Panc1 (cell line): ENCODE measurements at regions of chr6 and their contacts with region 1.

Region 1: GRCh38 chr6:157981395-157982296 is at the start of gene SYNJ2:
- DNase-seq: no peak
- ATAC-seq: peak; percentile 85
- H3K4me3 ChIP-seq: peak within 1 kb of the TSS; percentile 62 to 81
- H3K27ac ChIP-seq: peak within 1 kb of the TSS; percentile 97
- H3K4me1 ChIP-seq: peaks cover 34% of the 10 kb centered on the region
- H3K27me3 ChIP-seq: no peaks in the 10 kb centered on the region
- CTCF ChIP-seq: peak; percentile 90
- total RNA-seq, gene SYNJ2: 70.0 TPM

Region 2: DNA sequence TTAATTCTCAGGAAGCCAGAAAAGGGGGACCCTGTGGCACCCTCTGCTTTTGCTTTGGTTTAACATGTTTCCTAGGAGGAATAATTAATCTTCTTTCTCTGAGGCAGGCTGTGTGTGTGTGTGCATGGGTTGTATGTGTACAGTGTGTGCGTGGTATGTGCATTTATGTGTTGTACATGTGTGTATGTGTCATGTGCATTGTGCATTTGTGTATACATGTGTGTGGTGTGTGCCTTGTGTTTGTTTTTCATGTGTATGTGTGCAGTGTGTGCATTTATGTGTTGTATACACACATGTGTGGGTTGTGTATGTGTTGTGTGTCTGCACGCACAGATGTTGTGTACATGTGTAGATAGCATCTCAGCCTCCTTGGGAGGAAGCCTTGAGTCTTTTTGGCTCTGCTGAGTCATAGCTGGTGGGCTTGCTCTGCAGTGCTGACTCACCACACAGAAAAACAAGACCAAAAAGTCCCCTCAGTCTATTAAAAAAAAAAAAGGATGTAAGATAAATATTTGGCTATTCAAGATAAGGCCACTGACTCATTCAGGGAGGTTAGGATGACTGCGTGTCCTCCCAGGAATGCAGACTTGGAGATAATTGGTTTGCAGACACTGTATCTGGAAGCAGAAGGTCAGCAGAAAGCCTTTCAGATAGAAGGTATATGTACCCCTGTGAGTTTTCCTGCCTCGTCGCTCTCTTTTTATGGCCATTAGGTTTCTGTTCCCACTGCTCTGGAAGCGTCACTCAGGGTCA is 58.6 kb after region 1 on chr6:
- CTCF ChIA-PET with region 1: no interaction called
- POLR2A ChIA-PET with region 1: no interaction called
- in situ Hi-C with region 1: no loop called
- intact Hi-C with region 1: loop called (anchors 5 kb)
- DNase-seq: peak; percentile 82
- ATAC-seq: peak; percentile 75
- H3K4me3 ChIP-seq: no peak overlapping the region
- H3K27ac ChIP-seq: peak overlapping the region; percentile 91
- H3K4me1 ChIP-seq: peaks cover 79% of the 10 kb centered on the region
- H3K27me3 ChIP-seq: no peaks in the 10 kb centered on the region
- CTCF ChIP-seq: no peak

Region 3: GRCh38 chr6:158068893-158069799 is 87.5 kb after region 1 on chr6:
- CTCF ChIA-PET with region 1: interaction called, 6 read pairs
- POLR2A ChIA-PET with region 1: no interaction called
- in situ Hi-C with region 1: no loop called
- intact Hi-C with region 1: loop called (anchors 2 kb)
- DNase-seq: no peak
- ATAC-seq: peak; percentile 64
- H3K4me3 ChIP-seq: no peak overlapping the region
- H3K27ac ChIP-seq: peak overlapping the region; percentile 74
- H3K4me1 ChIP-seq: peaks cover 41% of the 10 kb centered on the region
- H3K27me3 ChIP-seq: no peaks in the 10 kb centered on the region
- CTCF ChIP-seq: no peak